GM12878 (cell line): ENCODE measurements at regions of chr11 and their contacts with region 1.

Region 1: GRCh38 chr11:95150946-95151684 is 61.5 kb downstream of the ENDOD1 start:
- DNase-seq: peak; percentile 77
- ATAC-seq: peak; percentile 89
- H3K4me3 ChIP-seq: peak overlapping the region; percentile 80
- H3K27ac ChIP-seq: peak overlapping the region; percentile 56
- H3K4me1 ChIP-seq: peaks cover 2% of the 10 kb centered on the region; the same call in 1 of the 2 replicates
- H3K27me3 ChIP-seq: no peaks in the 10 kb centered on the region
- CTCF ChIP-seq: peak; percentile 79 to 97 (median 87)
- EP300 ChIP-seq: no peak
- POLR2A ChIP-seq: peak; percentile 75
- RAD21 ChIP-seq: peak; percentile 38; the same call in 1 of the 2 replicates

Region 2: DNA sequence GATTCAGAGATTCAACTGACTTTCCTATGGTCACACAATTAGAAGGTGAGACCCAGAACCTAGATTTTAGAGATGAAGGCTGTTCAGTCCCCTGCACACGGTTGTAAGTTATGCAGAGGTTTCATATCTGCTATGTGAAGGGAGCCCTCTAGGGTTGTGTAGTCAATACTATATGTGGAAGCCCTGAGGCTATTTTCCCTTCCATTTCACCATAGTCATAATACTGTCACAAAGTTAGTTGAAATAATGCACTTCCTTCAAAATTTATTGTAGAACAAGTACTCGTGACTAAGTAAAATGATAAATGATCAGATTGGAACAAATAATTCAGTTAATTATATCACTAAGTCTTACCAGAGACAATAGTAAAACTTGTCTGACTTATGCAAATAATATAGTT is 12.7 kb before region 1 on chr11:
- CTCF ChIA-PET with region 1: interaction called, 29 read pairs
- POLR2A ChIA-PET with region 1: no interaction called
- RAD21 ChIA-PET with region 1: interaction called, 4 read pairs
- SMC1A ChIA-PET with region 1: interaction called, 9 read pairs
- in situ Hi-C with region 1: no loop called
- intact Hi-C with region 1: no loop called
- DNase-seq: no peak
- ATAC-seq: peak; percentile 97
- H3K4me3 ChIP-seq: no peak overlapping the region
- H3K27ac ChIP-seq: no peak overlapping the region
- H3K4me1 ChIP-seq: no peaks in the 10 kb centered on the region
- H3K27me3 ChIP-seq: 0 out of 4 replicates have a peak, but pooled peaks cover 0 to 2% of the 10 kb centered on the region in 2 experiments
- CTCF ChIP-seq: peak; percentile 36 to 65 (median 45); a peak in 5 of 6 replicates
- EP300 ChIP-seq: no peak
- POLR2A ChIP-seq: no peak
- RAD21 ChIP-seq: peak; percentile 84

Region 3: GRCh38 chr11:95231127-95231880 is 80.2 kb after region 1 on chr11 and contains the start of gene SESN3:
- CTCF ChIA-PET with region 1: interaction called, 38 read pairs
- POLR2A ChIA-PET with region 1: interaction called, 9 read pairs
- RAD21 ChIA-PET with region 1: interaction called, 48 read pairs
- SMC1A ChIA-PET with region 1: interaction called, 76 read pairs
- in situ Hi-C with region 1: no loop called
- intact Hi-C with region 1: no loop called
- DNase-seq: peak; percentile 93
- ATAC-seq: peak; percentile 89
- H3K4me3 ChIP-seq: peak within 1 kb of the TSS; percentile 62
- H3K27ac ChIP-seq: no peak within 1 kb of the TSS
- H3K4me1 ChIP-seq: peaks cover 8% of the 10 kb centered on the region
- H3K27me3 ChIP-seq: peaks cover 0 to 27% of the 10 kb centered on the region in 2 experiments; a peak in 2 of 4 replicates
- CTCF ChIP-seq: no peak; a peak in 1 of 6 replicates
- EP300 ChIP-seq: peak in 1 of 2 experiments; percentile 23; a peak in 1 of 4 replicates
- POLR2A ChIP-seq: peak; percentile 57; the same call in 1 of the 2 replicates
- RAD21 ChIP-seq: peak; percentile 35; the same call in 1 of the 2 replicates
- polyA plus RNA-seq, gene SESN3: 0.68 to 1.5 TPM

Region 4: DNA sequence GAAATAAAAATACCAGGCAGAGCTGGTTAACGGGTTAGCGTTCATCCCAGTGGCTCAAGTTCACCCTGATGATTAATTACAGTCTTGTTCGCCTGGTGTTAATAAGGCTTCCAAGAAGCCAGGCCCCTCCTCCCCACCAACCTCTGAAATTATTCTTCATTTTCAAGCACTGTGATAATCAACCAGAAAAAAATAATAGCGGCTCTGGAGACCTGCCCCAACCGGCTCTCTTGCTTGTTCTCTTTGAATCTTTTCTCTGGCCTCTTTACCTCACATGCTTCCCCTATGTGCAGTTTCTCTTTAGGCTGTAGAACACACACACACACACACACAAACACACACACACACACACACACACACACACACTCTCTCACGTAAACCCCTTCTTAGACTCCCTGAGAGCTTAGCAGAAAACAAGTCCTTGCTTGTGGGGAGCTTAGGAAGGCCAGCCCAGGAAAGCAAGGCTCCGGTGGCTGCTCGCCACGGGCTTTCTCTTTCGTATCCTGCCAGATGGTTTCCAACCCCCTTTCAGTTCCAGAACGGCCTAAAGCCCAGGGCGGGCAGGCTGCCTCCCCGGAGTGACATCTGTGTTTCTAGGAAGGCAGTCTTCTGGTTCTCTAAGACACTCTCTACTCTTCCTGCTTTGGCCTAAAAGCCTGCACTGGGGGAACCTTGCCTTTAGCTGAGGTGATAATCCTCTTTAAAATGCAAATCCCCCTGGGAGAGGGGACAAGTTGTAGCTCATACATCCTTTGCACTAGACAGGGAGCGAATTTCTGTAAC is 186.3 kb after region 1 on chr11:
- CTCF ChIA-PET with region 1: interaction called, 16 read pairs
- POLR2A ChIA-PET with region 1: no interaction called
- RAD21 ChIA-PET with region 1: interaction called, 8 read pairs
- SMC1A ChIA-PET with region 1: interaction called, 8 read pairs
- in situ Hi-C with region 1: no loop called
- intact Hi-C with region 1: no loop called
- DNase-seq: peak; percentile 36
- ATAC-seq: peak; percentile 84
- H3K4me3 ChIP-seq: no peak overlapping the region
- H3K27ac ChIP-seq: no peak overlapping the region
- H3K4me1 ChIP-seq: peaks cover 6% of the 10 kb centered on the region
- H3K27me3 ChIP-seq: no peaks in the 10 kb centered on the region; a peak in 1 of 4 replicates
- CTCF ChIP-seq: no peak
- EP300 ChIP-seq: no peak
- POLR2A ChIP-seq: no peak
- RAD21 ChIP-seq: no peak

Region 5: DNA sequence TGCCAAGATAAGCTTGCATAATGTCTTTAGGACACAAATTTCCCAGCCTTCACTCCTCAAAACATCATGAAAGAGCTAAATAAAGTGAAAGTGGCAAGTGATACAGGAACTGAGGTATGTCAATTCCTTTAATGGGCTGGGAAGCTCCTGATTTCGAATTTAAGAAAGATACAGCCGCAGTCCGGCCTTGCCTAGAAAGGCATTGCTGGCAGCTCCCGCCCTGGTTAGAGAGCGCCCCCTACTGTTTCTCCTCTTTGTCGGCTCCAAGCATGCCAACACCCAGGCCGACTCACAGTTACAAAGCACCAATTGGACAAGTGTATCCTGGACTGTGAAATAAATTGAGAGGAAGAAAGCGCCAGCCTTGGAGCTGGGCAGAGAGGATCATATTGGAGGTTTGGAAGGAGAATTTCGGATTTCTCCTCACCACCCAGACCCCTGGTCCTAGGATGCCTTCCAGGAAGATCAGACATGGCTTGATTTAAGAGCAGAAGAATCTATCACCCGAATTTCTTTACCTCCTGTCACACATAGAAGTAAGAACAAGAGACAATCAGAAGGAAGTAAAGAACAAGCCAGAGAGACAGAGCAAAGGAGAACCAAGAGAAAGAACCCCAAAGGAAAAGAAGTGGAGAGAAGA is 554.5 kb after region 1 on chr11:
- CTCF ChIA-PET with region 1: interaction called, 590 read pairs
- POLR2A ChIA-PET with region 1: interaction called, 23 read pairs
- RAD21 ChIA-PET with region 1: interaction called, 425 read pairs
- SMC1A ChIA-PET with region 1: interaction called, 474 read pairs
- in situ Hi-C with region 1: loop called (anchors 5 kb)
- intact Hi-C with region 1: loop called (anchors 1 kb)
- DNase-seq: no peak
- ATAC-seq: peak; percentile 98
- H3K4me3 ChIP-seq: no peak overlapping the region
- H3K27ac ChIP-seq: no peak overlapping the region
- H3K4me1 ChIP-seq: peaks cover 6% of the 10 kb centered on the region
- H3K27me3 ChIP-seq: no peaks in the 10 kb centered on the region
- CTCF ChIP-seq: peak; percentile 92 to 97 (median 93)
- EP300 ChIP-seq: no peak
- POLR2A ChIP-seq: no peak
- RAD21 ChIP-seq: peak; percentile 99

Region 6: DNA sequence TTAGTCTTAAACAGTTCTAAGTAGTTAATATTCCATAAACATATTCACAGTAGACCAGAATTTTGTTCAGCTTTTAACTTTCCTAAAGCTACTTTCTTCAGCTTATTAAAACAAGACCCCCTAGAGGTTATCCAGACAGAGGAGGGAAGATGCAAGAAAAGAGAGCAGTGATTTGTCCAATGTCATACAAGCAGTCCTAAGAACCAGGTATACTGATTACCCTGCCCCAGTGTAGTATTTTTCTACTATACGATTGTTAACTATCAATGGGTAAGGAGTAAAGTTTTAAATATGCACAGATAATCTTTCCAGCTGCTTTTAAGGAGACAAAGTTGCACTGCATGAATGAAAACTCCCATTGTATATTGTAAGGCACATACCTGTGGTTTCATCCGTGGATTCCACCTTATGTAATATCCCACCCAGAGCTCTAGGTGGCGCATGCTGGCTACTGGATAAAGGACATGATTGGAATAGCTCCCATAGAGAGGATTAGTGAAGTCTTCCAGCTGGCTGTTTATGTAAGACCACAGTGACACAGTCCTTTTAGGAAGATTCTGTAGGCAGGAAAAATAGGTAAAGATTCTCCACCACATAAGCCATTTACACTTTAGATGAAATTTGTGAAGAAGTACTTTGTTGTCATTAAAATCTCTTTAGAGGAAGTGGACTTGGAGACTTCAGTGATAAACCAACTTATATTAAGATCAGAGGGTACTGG is 684.8 kb after region 1 on chr11:
- CTCF ChIA-PET with region 1: interaction called, 12 read pairs
- POLR2A ChIA-PET with region 1: no interaction called
- RAD21 ChIA-PET with region 1: no interaction called
- SMC1A ChIA-PET with region 1: interaction called, 3 read pairs
- in situ Hi-C with region 1: no loop called
- intact Hi-C with region 1: no loop called
- DNase-seq: peak; percentile 13
- ATAC-seq: peak; percentile 97
- H3K4me3 ChIP-seq: no peak overlapping the region
- H3K27ac ChIP-seq: no peak overlapping the region
- H3K4me1 ChIP-seq: no peaks in the 10 kb centered on the region
- H3K27me3 ChIP-seq: no peaks in the 10 kb centered on the region
- CTCF ChIP-seq: peak; percentile 86 to 94 (median 88)
- EP300 ChIP-seq: no peak
- POLR2A ChIP-seq: no peak
- RAD21 ChIP-seq: peak; percentile 96